Activated naive CD8-positive, alpha-beta T cell treated with anti-CD3 and anti-CD28 coated beads, Interleukin-2, amount 10 ng/mL, durations not matched to agents 7 days and 5 days (primary cell): ENCODE measurements at regions of chr10 and their contacts with region 1.

Region 1: GRCh38 chr10:6530211-6530840 is 49.8 kb downstream of the PRKCQ start:
- DNase-seq: peak; percentile 76
- ATAC-seq: peak; percentile 98
- H3K4me3 Mint-ChIP-seq: peak overlapping the region; percentile 93
- H3K27ac Mint-ChIP-seq: peak overlapping the region; percentile 98
- H3K4me1 Mint-ChIP-seq: peaks cover 67% of the 10 kb centered on the region
- H3K27me3 Mint-ChIP-seq: no peaks in the 10 kb centered on the region

Region 2: GRCh38 chr10:6321880-6322279 is 208.4 kb before region 1 on chr10:
- POLR2A ChIA-PET with region 1: no interaction called
- DNase-seq: no peak
- ATAC-seq: no peak
- H3K4me3 Mint-ChIP-seq: no peak overlapping the region
- H3K27ac Mint-ChIP-seq: no peak overlapping the region
- H3K4me1 Mint-ChIP-seq: peaks cover 7% of the 10 kb centered on the region
- H3K27me3 Mint-ChIP-seq: no peaks in the 10 kb centered on the region

Region 3: GRCh38 chr10:6363503-6363902 is 166.8 kb before region 1 on chr10:
- POLR2A ChIA-PET with region 1: no interaction called
- DNase-seq: no peak
- ATAC-seq: no peak
- H3K4me3 Mint-ChIP-seq: no peak overlapping the region
- H3K27ac Mint-ChIP-seq: no peak overlapping the region
- H3K4me1 Mint-ChIP-seq: no peaks in the 10 kb centered on the region
- H3K27me3 Mint-ChIP-seq: no peaks in the 10 kb centered on the region

Region 4: GRCh38 chr10:6473901-6474370 is 56.4 kb before region 1 on chr10:
- POLR2A ChIA-PET with region 1: interaction called, 15 read pairs
- DNase-seq: peak; percentile 60
- ATAC-seq: peak; percentile 76
- H3K4me3 Mint-ChIP-seq: peak overlapping the region; percentile 82
- H3K27ac Mint-ChIP-seq: peak overlapping the region; percentile 92
- H3K4me1 Mint-ChIP-seq: peaks cover 65% of the 10 kb centered on the region
- H3K27me3 Mint-ChIP-seq: no peaks in the 10 kb centered on the region

Region 5: GRCh38 chr10:6542999-6543430 is 12.7 kb after region 1 on chr10:
- POLR2A ChIA-PET with region 1: interaction called, 51 read pairs
- DNase-seq: peak; percentile 63
- ATAC-seq: peak; percentile 86
- H3K4me3 Mint-ChIP-seq: peak overlapping the region; percentile 95
- H3K27ac Mint-ChIP-seq: peak overlapping the region; percentile 100
- H3K4me1 Mint-ChIP-seq: peaks cover 59% of the 10 kb centered on the region
- H3K27me3 Mint-ChIP-seq: no peaks in the 10 kb centered on the region

Region 6: GRCh38 chr10:6563075-6563474 is 32.7 kb after region 1 on chr10:
- POLR2A ChIA-PET with region 1: interaction called, 12 read pairs
- DNase-seq: peak; percentile 50
- ATAC-seq: peak; percentile 89
- H3K4me3 Mint-ChIP-seq: peak overlapping the region; percentile 85
- H3K27ac Mint-ChIP-seq: peak overlapping the region; percentile 85
- H3K4me1 Mint-ChIP-seq: peaks cover 68% of the 10 kb centered on the region
- H3K27me3 Mint-ChIP-seq: no peaks in the 10 kb centered on the region